GM12878 (cell line): ENCODE measurements at regions of chr1 and their contacts with region 1.

Region 1: GRCh38 chr1:198763298-198763714 is 124.5 kb downstream of the PTPRC start:
- DNase-seq: no peak
- ATAC-seq: peak; percentile 44
- H3K4me3 ChIP-seq: no peak overlapping the region
- H3K27ac ChIP-seq: no peak overlapping the region
- H3K4me1 ChIP-seq: no peaks in the 10 kb centered on the region
- H3K27me3 ChIP-seq: no peaks in the 10 kb centered on the region
- CTCF ChIP-seq: no peak
- EP300 ChIP-seq: no peak
- POLR2A ChIP-seq: no peak
- RAD21 ChIP-seq: no peak

Region 2: GRCh38 chr1:199545780-199546179 is 782.5 kb after region 1 on chr1:
- CTCF ChIA-PET with region 1: no interaction called
- POLR2A ChIA-PET with region 1: no interaction called
- RAD21 ChIA-PET with region 1: no interaction called
- SMC1A ChIA-PET with region 1: no interaction called
- in situ Hi-C with region 1: loop called (anchors 10 kb)
- intact Hi-C with region 1: no loop called
- DNase-seq: no peak
- ATAC-seq: peak; percentile 78
- H3K4me3 ChIP-seq: no peak overlapping the region
- H3K27ac ChIP-seq: no peak overlapping the region
- H3K4me1 ChIP-seq: no peaks in the 10 kb centered on the region
- H3K27me3 ChIP-seq: no peaks in the 10 kb centered on the region
- CTCF ChIP-seq: peak; percentile 11 to 27 (median 22); a peak in 3 of 6 replicates
- EP300 ChIP-seq: no peak
- POLR2A ChIP-seq: no peak
- RAD21 ChIP-seq: peak; percentile 39